CD4-positive, alpha-beta memory T cell (primary cell): ENCODE measurements at regions of chr2 and their contacts with region 1.

Region 1: DNA sequence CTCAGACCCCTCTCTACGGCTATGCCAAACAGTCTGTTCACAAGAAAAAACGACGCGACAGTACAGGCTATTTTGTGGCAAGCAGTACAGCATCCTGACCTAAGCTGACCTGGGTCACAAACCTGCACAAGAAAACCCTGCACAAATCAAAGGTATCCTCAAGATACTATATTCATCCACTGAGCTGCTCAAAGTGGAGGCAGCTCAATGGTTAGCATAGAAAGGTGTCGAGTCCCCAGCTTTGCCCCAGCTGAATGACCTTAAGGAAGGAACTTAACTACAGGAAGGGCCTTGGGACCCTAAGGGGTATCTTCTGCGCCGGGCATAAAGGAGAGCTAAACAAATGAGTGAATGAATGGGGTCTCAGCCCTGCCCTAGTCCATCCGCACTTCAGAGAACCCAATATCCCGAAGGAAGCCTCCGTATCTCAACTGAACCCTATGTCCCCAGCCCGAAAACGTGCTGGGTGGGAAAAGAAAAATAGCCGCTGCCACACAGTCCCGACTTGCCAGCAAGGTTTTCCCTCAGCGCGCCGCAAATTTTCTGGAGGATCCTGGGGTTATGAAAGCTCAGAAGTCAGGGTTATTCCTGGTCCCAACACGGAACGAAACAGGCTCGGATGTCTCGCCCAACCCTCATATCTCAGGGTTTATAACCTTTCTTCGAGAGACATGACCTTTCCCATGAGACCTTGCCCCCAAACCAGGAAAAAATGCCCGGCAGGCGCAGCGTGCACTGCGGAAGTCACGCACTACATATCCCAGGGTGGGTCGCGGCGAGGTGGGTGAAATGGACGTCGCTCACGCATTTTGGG is at the start of gene FASTKD1:
- DNase-seq: peak; percentile 78 to 90 (median 82)
- H3K4me3 ChIP-seq: peak within 1 kb of the TSS; percentile 38 to 80
- H3K4me3 Mint-ChIP-seq: peak within 1 kb of the TSS; percentile 95 to 99 (median 97)
- H3K27ac ChIP-seq: peak within 1 kb of the TSS; percentile 82
- H3K27ac Mint-ChIP-seq: peak within 1 kb of the TSS; percentile 87 to 98 (median 95)
- H3K4me1 ChIP-seq: peaks cover 12% of the 10 kb centered on the region
- H3K4me1 Mint-ChIP-seq: peaks cover 14 to 32% (median 25%) of the 10 kb centered on the region in 4 donors
- H3K27me3 ChIP-seq: no peaks in the 10 kb centered on the region
- H3K27me3 Mint-ChIP-seq: peaks cover 2 to 3% of the 10 kb centered on the region in 2 donors
- total RNA-seq, gene FASTKD1: 25.8 to 31.8 TPM

Region 2: DNA sequence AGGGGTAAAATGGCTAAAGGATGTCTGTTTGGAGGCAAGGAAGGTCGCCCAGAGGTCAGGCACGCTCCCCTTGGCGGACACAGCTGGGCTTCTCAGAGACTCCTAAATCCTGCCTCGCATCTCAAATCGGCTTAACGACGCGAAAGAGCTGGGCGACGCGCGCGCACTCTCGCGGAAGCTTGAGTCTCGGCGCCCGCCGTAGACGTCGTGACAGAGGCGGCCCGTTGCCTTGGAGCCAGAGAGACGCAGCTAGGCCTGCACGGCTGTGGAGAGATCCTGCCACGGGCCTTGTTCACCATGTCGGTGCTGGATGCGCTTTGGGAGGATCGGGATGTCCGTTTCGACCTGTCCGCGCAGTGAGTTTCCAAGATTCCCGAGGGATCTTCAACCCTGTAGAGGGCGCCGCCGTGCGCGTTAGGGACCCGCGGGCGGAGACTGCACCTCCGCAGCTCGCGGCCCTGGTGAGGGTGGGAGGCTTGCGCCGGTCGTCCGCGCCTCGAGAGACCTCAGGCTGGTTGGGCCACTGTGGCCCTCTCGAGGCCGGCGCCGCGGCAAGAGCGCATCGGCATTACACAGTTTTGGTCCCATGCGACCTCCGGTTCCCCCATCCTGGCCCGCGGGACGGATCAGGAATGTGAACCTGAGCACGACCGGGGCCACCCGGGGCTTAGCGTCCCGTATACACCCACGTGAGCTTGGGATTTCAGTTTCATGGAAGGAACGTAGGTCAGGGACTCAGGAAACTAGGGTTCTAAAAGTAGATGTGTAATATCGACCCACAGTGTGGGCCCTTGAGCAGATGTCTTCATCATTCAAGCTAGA is 93.9 kb before region 1 on chr2 and contains the start of gene BBS5:
- CTCF ChIA-PET with region 1: no interaction called
- POLR2A ChIA-PET with region 1: interaction called, 3 read pairs
- intact Hi-C with region 1: loop called (anchors 5 kb)
- DNase-seq: peak; percentile 61 to 76 (median 70)
- H3K4me3 ChIP-seq: peak within 1 kb of the TSS; percentile 75 to 85
- H3K4me3 Mint-ChIP-seq: peak within 1 kb of the TSS; percentile 92 to 95 (median 94)
- H3K27ac ChIP-seq: peak within 1 kb of the TSS; percentile 29
- H3K27ac Mint-ChIP-seq: peak within 1 kb of the TSS in 6 of 7 donors; percentile 54 to 92 (median 81)
- H3K4me1 ChIP-seq: peaks cover 13% of the 10 kb centered on the region
- H3K4me1 Mint-ChIP-seq: peaks cover 6 to 21% (median 16%) of the 10 kb centered on the region in 4 donors
- H3K27me3 ChIP-seq: no peaks in the 10 kb centered on the region
- H3K27me3 Mint-ChIP-seq: no peaks in the 10 kb centered on the region
- total RNA-seq, gene BBS5: 1.7 to 1.8 TPM

Region 3: DNA sequence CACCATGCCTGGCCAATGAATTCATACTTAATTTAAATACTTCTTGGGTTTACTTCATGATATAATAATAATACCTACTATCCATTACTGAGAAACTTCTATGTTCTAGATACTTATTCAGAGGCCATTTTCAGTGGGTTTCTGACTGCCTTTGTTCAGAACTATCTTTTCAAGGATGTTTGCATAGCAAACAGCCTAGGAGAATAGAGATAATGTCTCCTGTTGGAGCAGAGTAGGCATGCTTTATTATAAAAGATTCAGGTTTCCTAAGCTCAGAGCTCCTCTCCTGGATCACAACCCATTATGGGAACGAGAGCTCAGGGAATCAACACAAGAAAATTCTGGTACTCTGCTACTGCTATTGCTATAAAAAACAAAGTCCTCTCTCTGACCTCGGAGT is 10.8 kb before region 1 on chr2:
- CTCF ChIA-PET with region 1: interaction called, 5 read pairs
- POLR2A ChIA-PET with region 1: interaction called, 13 read pairs
- intact Hi-C with region 1: no loop called
- DNase-seq: no peak
- H3K4me3 ChIP-seq: no peak overlapping the region
- H3K4me3 Mint-ChIP-seq: no peak overlapping the region
- H3K27ac ChIP-seq: no peak overlapping the region
- H3K27ac Mint-ChIP-seq: peak overlapping the region in 5 of 7 donors; percentile 11 to 78 (median 55)
- H3K4me1 ChIP-seq: no peaks in the 10 kb centered on the region
- H3K4me1 Mint-ChIP-seq: peaks cover 0 to 1% (median 0%) of the 10 kb centered on the region in 4 donors
- H3K27me3 ChIP-seq: no peaks in the 10 kb centered on the region
- H3K27me3 Mint-ChIP-seq: no peaks in the 10 kb centered on the region

Region 4: DNA sequence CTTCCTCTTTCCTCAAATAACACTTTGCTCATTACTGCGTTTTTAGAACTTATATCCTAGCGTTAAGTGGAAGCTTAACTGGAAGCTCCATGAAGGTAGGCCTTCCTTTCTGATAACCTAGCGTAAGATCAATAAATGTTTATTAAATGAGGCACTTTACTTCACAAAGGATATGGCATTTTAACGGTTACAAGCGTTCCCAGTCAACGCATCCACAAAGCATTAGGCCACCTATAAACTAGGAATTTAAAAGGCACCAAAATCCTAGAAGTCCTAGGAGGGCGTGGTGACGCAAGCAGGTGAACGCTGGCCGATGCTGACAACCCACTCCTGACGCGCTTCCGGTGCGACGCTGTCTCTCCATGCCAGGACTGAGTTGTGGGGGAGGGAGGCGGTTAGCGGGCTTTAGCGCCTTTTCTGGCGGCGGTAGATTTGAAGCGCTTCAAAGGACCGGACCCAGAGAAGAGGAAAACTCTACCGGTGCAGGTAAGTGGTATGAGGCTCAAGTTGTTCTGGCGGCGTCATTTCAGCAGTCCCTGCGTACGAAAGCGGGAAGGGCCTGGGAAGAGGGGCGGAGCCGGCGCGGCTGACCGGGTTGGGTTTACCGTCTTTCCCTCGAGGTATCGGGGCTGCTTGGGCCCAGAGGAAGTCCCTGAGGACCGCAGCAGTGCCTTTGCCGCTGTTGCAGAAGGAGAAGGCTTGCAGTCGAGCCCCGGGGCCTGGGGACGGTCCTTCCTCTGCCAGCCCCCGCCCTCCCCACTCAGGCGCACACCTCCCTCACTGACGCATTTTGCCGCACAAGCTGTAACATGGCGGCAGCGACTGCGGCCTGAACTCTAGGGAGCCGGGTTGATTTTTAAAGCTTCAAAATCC is 10.9 kb after region 1 on chr2 and contains the start of gene PPIG:
- CTCF ChIA-PET with region 1: interaction called, 10 read pairs
- POLR2A ChIA-PET with region 1: interaction called, 41 read pairs
- intact Hi-C with region 1: loop called (anchors 1 kb)
- DNase-seq: peak; percentile 86 to 93 (median 89)
- H3K4me3 ChIP-seq: peak within 1 kb of the TSS; percentile 76 to 92
- H3K4me3 Mint-ChIP-seq: peak within 1 kb of the TSS; percentile 96 to 100 (median 98)
- H3K27ac ChIP-seq: peak within 1 kb of the TSS; percentile 94
- H3K27ac Mint-ChIP-seq: peak within 1 kb of the TSS; percentile 98 to 100 (median 100)
- H3K4me1 ChIP-seq: peaks cover 35% of the 10 kb centered on the region
- H3K4me1 Mint-ChIP-seq: peaks cover 20 to 49% (median 34%) of the 10 kb centered on the region in 4 donors
- H3K27me3 ChIP-seq: no peaks in the 10 kb centered on the region
- H3K27me3 Mint-ChIP-seq: no peaks in the 10 kb centered on the region
- total RNA-seq, gene PPIG: 79.2 to 82.9 TPM

Region 5: DNA sequence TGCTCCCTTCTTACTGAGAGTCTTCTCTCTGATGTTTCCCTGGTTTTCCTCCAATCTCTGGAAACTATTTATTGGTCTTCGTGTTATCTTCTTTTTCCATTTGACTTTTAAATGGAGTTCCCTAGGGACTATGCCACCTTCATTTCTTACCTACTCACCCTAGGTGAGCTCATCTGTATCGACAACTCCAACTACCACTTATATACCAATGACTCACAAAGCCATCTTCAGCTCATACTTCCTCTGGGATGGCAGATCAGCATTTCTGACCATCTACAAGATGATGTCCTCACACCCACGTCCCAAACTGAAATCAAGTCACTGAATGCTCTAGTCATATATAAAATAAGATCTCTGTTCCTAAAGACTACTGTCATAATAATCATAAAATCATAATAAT is 80.3 kb after region 1 on chr2:
- CTCF ChIA-PET with region 1: no interaction called
- POLR2A ChIA-PET with region 1: no interaction called
- intact Hi-C with region 1: loop called (anchors 2 kb)
- DNase-seq: no peak
- H3K4me3 ChIP-seq: no peak overlapping the region
- H3K4me3 Mint-ChIP-seq: no peak overlapping the region
- H3K27ac ChIP-seq: no peak overlapping the region
- H3K27ac Mint-ChIP-seq: no peak overlapping the region
- H3K4me1 ChIP-seq: no peaks in the 10 kb centered on the region
- H3K4me1 Mint-ChIP-seq: peaks cover 0 to 2% (median 0%) of the 10 kb centered on the region in 4 donors
- H3K27me3 ChIP-seq: no peaks in the 10 kb centered on the region
- H3K27me3 Mint-ChIP-seq: peaks cover 8 to 11% of the 10 kb centered on the region in 2 donors

Region 6: DNA sequence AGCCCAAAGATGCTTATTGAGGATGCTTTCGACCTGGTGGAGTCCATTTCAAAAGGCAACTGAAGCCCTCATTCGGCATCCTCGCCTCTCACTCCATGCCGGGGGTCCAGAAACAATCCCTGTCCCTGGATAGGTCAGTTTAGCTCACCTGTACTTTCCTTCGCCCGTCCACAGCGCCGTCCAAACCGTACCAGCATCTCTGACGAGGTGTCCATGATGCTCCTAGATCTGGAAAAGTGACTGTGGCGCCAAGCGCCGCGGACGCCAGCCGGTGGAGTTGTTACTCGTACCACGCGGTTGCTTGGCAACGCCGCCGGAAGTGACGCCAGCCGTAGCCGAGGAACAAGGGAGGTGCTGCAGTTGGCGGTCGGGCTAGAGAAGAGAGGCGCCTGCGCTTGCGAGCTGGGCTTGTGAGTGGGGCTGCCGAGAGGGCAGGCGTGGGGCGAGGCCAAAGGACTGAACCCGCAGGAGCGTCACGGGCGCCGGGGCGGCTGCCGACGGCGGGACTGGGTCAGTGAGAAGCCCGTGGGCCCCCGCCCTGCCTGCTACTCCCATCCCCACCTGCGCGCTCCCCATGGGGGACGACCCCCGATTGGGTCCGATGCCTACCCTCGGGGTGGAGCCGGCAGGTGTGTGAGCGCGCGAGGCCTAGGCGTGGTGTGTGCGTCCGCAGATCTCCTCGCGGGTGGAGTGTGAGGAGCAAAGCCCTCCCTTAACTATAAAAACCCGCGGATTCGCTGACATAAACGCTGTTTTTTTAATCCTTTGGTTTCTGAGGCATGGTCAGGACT is 120.9 kb after region 1 on chr2 and contains the starts of genes CFAP210 and PHOSPHO2:
- CTCF ChIA-PET with region 1: no interaction called
- POLR2A ChIA-PET with region 1: no interaction called
- intact Hi-C with region 1: loop called (anchors 1 kb)
- DNase-seq: peak; percentile 98 to 99 (median 99)
- H3K4me3 ChIP-seq: peak within 1 kb of the TSS; percentile 37 to 69
- H3K4me3 Mint-ChIP-seq: peak within 1 kb of the TSS; percentile 88 to 96 (median 92)
- H3K27ac ChIP-seq: peak within 1 kb of the TSS; percentile 72
- H3K27ac Mint-ChIP-seq: peak within 1 kb of the TSS; percentile 93 to 100 (median 99)
- H3K4me1 ChIP-seq: peaks cover 15% of the 10 kb centered on the region
- H3K4me1 Mint-ChIP-seq: peaks cover 12 to 21% (median 16%) of the 10 kb centered on the region in 4 donors
- H3K27me3 ChIP-seq: no peaks in the 10 kb centered on the region
- H3K27me3 Mint-ChIP-seq: peaks cover 5 to 8% of the 10 kb centered on the region in 2 donors
- total RNA-seq, gene CFAP210: not detected
- total RNA-seq, gene PHOSPHO2: 7.2 to 7.4 TPM

Region 7: GRCh38 chr2:169798718-169799592 is 225.6 kb after region 1 on chr2 and contains the start of gene SSB:
- CTCF ChIA-PET with region 1: no interaction called
- POLR2A ChIA-PET with region 1: interaction called, 5 read pairs
- intact Hi-C with region 1: loop called (anchors 2 kb)
- DNase-seq: peak; percentile 87 to 95 (median 89)
- H3K4me3 ChIP-seq: peak within 1 kb of the TSS; percentile 45 to 95
- H3K4me3 Mint-ChIP-seq: peak within 1 kb of the TSS; percentile 84 to 95 (median 92)
- H3K27ac ChIP-seq: peak within 1 kb of the TSS; percentile 85
- H3K27ac Mint-ChIP-seq: peak within 1 kb of the TSS; percentile 93 to 97 (median 95)
- H3K4me1 ChIP-seq: peaks cover 43% of the 10 kb centered on the region
- H3K4me1 Mint-ChIP-seq: peaks cover 16 to 45% (median 33%) of the 10 kb centered on the region in 4 donors
- H3K27me3 ChIP-seq: no peaks in the 10 kb centered on the region
- H3K27me3 Mint-ChIP-seq: peaks cover 0 to 5% of the 10 kb centered on the region in 2 donors
- total RNA-seq, gene SSB: 112 to 114 TPM